CD8-positive, alpha-beta T cell (primary cell): ENCODE measurements at regions of chr2 and their contacts with region 1.

Region 1: DNA sequence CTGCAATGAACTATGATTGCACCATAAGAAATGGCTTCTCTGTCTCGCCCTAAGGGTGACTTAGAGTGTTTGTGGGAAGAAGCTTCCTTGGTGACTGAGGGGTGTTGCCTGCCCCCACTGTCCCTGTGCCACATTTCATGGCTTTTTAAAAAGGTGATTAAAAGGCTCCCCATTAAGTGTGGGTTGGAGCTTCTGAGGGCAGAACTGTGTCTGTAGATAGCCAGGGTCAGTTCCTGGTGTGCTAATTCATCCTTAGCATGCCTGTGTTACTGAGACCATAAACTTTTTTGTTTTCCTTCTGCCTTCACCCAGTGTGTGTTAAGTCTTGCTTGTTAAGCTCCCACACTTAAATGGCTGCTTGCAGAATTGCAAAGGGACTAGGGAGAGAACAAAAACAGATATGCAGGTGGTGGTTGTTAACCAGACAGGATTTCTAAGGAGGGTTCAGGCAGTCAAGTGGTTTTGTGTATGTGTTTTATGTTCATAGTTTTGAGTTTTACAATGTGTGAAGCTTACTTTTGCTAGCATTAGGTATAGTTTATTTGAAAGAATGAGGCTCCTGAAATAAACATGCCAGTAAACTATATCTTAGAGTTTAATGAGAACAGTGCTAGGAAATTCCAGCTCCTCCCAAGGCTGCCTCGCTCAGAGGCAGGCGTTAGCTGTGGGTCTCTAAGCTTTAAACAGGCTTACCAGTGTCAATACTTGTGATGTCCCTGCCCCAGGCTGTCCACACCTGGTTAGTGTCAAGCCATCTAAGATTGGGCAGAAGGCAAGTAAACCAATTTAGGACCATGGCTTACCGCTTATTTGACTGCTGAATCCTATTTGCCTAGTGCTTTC is 14.5 kb downstream of the CERS6 start:
- DNase-seq: no peak
- ATAC-seq: no peak
- H3K4me3 ChIP-seq: no peak overlapping the region
- H3K4me3 Mint-ChIP-seq: peak overlapping the region; percentile 4
- H3K27ac ChIP-seq: no peak overlapping the region
- H3K27ac Mint-ChIP-seq: peak overlapping the region; percentile 74
- H3K4me1 ChIP-seq: peaks cover 54% of the 10 kb centered on the region
- H3K4me1 Mint-ChIP-seq: peaks cover 71% of the 10 kb centered on the region
- H3K27me3 ChIP-seq: no peaks in the 10 kb centered on the region
- H3K27me3 Mint-ChIP-seq: no peaks in the 10 kb centered on the region
- CTCF ChIP-seq: no peak

Region 2: GRCh38 chr2:168455648-168456520 is 14.7 kb before region 1 on chr2 and contains the start of gene CERS6:
- CTCF ChIA-PET with region 1: no interaction called
- POLR2A ChIA-PET with region 1: interaction called, 4 read pairs
- intact Hi-C with region 1: loop called in 1 of 2 experiments (anchors 2 kb)
- DNase-seq: peak; percentile 46 to 87 (median 73)
- ATAC-seq: peak; percentile 73
- H3K4me3 ChIP-seq: peak within 1 kb of the TSS; percentile 72 to 77
- H3K4me3 Mint-ChIP-seq: no peak within 1 kb of the TSS
- H3K27ac ChIP-seq: peak within 1 kb of the TSS in 1 of 2 experiments; percentile 44
- H3K27ac Mint-ChIP-seq: peak within 1 kb of the TSS; percentile 74
- H3K4me1 ChIP-seq: peaks cover 32% of the 10 kb centered on the region
- H3K4me1 Mint-ChIP-seq: peaks cover 40% of the 10 kb centered on the region
- H3K27me3 ChIP-seq: no peaks in the 10 kb centered on the region
- H3K27me3 Mint-ChIP-seq: no peaks in the 10 kb centered on the region
- CTCF ChIP-seq: no peak
- total RNA-seq, gene CERS6: 17.9 to 18.5 TPM

Region 3: GRCh38 chr2:168480825-168481585 is 10.5 kb after region 1 on chr2:
- CTCF ChIA-PET with region 1: interaction called, 13 read pairs
- POLR2A ChIA-PET with region 1: interaction called, 4 read pairs
- intact Hi-C with region 1: no loop called
- DNase-seq: no peak
- ATAC-seq: no peak
- H3K4me3 ChIP-seq: no peak overlapping the region
- H3K4me3 Mint-ChIP-seq: no peak overlapping the region
- H3K27ac ChIP-seq: no peak overlapping the region
- H3K27ac Mint-ChIP-seq: peak overlapping the region; percentile 45
- H3K4me1 ChIP-seq: peaks cover 16% of the 10 kb centered on the region
- H3K4me1 Mint-ChIP-seq: peaks cover 66% of the 10 kb centered on the region
- H3K27me3 ChIP-seq: no peaks in the 10 kb centered on the region
- H3K27me3 Mint-ChIP-seq: no peaks in the 10 kb centered on the region
- CTCF ChIP-seq: no peak

Region 4: DNA sequence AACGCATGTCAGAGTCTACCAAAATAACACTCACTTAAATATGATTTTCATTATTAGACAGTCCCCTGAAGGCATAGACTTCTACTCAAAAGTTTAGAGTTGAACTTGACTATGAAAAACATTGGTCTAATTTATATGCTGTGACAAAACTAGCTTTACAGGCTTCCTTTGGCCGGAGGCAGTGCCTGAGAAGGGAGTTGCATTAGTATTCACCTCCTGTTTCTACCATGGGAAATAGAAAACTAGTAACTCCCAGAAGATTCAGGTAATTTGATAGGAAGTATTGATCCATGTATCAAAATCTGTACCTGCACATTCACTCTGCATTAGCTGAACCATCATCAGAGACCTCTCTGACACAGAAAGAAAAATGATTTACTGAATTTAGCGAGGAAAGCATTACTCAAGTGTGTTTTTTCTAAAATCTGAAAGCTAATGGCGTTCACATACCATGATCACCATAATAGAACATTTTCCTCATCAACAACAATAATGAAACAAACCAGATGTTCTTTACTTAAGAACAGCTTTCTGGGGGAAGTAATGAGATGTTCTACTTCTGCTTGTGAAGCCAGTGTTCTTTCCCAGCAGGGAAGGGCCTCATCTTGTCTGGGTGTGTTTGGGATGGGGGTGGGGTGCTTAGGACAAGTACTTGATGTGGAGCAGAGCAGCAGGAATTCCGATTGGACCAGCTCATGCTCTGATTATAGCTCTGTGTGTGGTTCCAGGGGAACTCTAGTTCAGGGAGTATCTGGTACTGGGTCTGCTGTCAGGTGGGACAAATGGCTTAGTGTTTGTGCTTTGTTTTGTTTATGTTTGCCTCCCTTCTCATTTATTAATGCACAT is 168.7 kb after region 1 on chr2:
- CTCF ChIA-PET with region 1: no interaction called
- POLR2A ChIA-PET with region 1: no interaction called
- intact Hi-C with region 1: no loop called
- DNase-seq: no peak
- ATAC-seq: no peak
- H3K4me3 ChIP-seq: no peak overlapping the region
- H3K4me3 Mint-ChIP-seq: no peak overlapping the region
- H3K27ac ChIP-seq: no peak overlapping the region
- H3K27ac Mint-ChIP-seq: no peak overlapping the region
- H3K4me1 ChIP-seq: no peaks in the 10 kb centered on the region
- H3K4me1 Mint-ChIP-seq: peaks cover 41% of the 10 kb centered on the region
- H3K27me3 ChIP-seq: no peaks in the 10 kb centered on the region
- H3K27me3 Mint-ChIP-seq: no peaks in the 10 kb centered on the region
- CTCF ChIP-seq: no peak

Region 5: GRCh38 chr2:169012812-169013627 is 542.5 kb after region 1 on chr2:
- CTCF ChIA-PET with region 1: no interaction called
- POLR2A ChIA-PET with region 1: no interaction called
- intact Hi-C with region 1: no loop called
- DNase-seq: no peak
- ATAC-seq: no peak
- H3K4me3 ChIP-seq: no peak overlapping the region
- H3K4me3 Mint-ChIP-seq: no peak overlapping the region
- H3K27ac ChIP-seq: no peak overlapping the region
- H3K27ac Mint-ChIP-seq: no peak overlapping the region
- H3K4me1 ChIP-seq: no peaks in the 10 kb centered on the region
- H3K4me1 Mint-ChIP-seq: peaks cover 4% of the 10 kb centered on the region
- H3K27me3 ChIP-seq: no peaks in the 10 kb centered on the region
- H3K27me3 Mint-ChIP-seq: no peaks in the 10 kb centered on the region
- CTCF ChIP-seq: no peak